Posterior vena cava (tissue), 2 donors: ENCODE measurements at regions of chr14 and their contacts with region 1.

Region 1: GRCh38 chr14:61837336-61838229 is 75.4 kb downstream of the SNAPC1 start:
- DNase-seq: peak; percentile 92

Region 2: DNA sequence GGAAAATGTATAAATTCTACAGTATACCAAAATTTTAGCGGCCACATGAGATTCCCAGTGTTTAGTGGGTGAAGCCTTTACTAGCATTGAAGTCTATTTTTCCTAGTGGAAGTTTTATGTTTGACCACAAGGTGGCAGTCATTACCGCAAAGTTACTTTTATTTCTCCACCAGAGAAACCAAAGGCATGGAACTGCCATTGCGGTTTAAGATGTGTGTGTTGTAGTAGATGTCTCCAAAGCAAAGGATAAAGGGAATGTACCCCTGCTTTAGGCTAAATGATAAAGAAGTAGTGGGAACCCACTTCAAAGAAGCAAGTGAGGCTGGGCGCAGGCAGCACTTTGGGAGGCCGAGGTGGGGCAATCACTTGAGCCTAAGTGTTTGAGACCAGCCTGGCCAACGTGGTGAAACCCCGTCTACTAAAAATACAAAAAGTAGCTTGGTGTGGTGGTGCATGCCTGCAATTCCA is 375.7 kb before region 1 on chr14:
- intact Hi-C with region 1: loop called (anchors 2 to 5 kb)
- DNase-seq: no peak

Region 3: DNA sequence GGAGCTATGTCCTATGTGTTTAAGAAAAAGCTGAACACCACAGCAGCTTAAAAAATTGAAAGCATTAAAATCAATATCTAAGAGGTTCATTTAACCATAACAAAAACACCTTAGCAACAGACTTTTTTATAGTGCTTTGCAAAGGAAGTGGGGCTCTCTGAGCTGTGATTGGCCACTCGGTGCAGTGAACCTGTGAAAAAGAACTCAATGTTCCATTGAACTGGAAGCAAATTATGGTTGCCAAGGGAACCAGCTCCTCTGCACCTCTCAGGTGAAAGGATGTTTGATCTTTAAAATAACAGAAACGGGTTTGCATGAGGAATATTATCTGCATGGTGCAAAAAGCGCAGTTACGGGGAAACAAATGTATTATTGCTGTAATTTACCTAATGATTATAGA is 74.0 kb after region 1 on chr14:
- intact Hi-C with region 1: loop called in 1 of 2 experiments (anchors 2 kb)
- DNase-seq: no peak